ENCODE measurements at regions of chr12 and their contacts with region 1.

Region 1: GRCh38 chr12:49580572-49581535 is 12.9 kb upstream of the MCRS1 start:
- DNase-seq: peak; percentile 65
- H3K4me3 Mint-ChIP-seq: no peak overlapping the region
- H3K27ac Mint-ChIP-seq: no peak overlapping the region
- H3K4me1 Mint-ChIP-seq: peaks cover 21% of the 10 kb centered on the region
- H3K27me3 Mint-ChIP-seq: no peaks in the 10 kb centered on the region

Region 2: GRCh38 chr12:49482095-49483051 is 98.5 kb before region 1 on chr12:
- CTCF ChIA-PET with region 1: no interaction called
- POLR2A ChIA-PET with region 1: no interaction called
- DNase-seq: no peak
- H3K4me3 Mint-ChIP-seq: no peak overlapping the region
- H3K27ac Mint-ChIP-seq: no peak overlapping the region
- H3K4me1 Mint-ChIP-seq: peaks cover 8% of the 10 kb centered on the region
- H3K27me3 Mint-ChIP-seq: no peaks in the 10 kb centered on the region

Region 3: GRCh38 chr12:49515266-49515665 is 65.6 kb before region 1 on chr12:
- CTCF ChIA-PET with region 1: interaction called, 16 read pairs
- POLR2A ChIA-PET with region 1: no interaction called
- DNase-seq: no peak
- H3K4me3 Mint-ChIP-seq: no peak overlapping the region
- H3K27ac Mint-ChIP-seq: no peak overlapping the region
- H3K4me1 Mint-ChIP-seq: peaks cover 1% of the 10 kb centered on the region
- H3K27me3 Mint-ChIP-seq: no peaks in the 10 kb centered on the region

Region 4: GRCh38 chr12:49553512-49554088 is 27.3 kb before region 1 on chr12:
- CTCF ChIA-PET with region 1: interaction called, 45 read pairs
- POLR2A ChIA-PET with region 1: interaction called, 3 read pairs
- DNase-seq: no peak
- H3K4me3 Mint-ChIP-seq: no peak overlapping the region
- H3K27ac Mint-ChIP-seq: no peak overlapping the region
- H3K4me1 Mint-ChIP-seq: peaks cover 8% of the 10 kb centered on the region
- H3K27me3 Mint-ChIP-seq: peaks cover 30% of the 10 kb centered on the region

Region 5: DNA sequence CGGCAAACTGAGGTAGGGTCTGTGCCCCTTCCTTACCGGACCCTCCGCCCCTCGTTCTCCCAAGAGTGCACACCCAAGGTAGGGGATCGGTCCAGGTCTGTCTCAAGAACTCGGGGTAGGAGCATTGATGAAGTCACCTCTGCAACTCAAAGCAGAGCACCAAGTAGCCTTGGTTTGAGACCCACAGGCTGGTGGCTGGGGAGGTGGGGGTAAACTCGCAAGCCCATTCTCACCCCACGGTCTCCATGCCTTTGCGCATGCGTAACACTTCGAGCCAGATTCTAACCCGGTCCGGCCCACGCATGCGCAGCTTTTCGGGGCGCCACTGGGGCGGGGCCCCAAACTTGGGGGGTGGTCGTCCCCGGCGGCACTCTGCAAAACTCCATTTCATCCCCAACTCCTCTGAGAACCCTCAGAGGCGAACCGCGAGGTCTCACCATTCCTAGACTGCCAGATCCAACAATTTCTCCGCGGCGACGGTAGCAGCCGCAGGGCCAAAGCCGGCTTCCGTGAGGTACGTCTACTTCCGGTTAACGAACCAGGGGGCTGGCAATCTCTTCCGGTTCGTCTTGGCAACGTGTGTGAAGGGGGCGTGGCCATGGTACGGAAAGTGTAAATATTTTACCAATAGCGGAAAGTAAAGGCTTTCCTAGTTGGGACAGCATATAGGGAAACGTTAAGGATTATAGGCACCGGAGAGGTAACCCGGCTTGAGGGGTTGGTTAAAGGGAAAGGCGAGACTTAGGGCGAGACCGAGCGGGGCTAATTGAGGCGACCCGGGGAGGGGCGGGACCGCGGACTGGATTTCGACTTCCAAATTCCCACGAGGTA is 13.0 kb before region 1 on chr12 and contains the start of gene MCRS1:
- CTCF ChIA-PET with region 1: interaction called, 41 read pairs
- POLR2A ChIA-PET with region 1: interaction called, 7 read pairs
- DNase-seq: peak; percentile 90
- H3K4me3 Mint-ChIP-seq: peak within 1 kb of the TSS; percentile 97
- H3K27ac Mint-ChIP-seq: peak within 1 kb of the TSS; percentile 89
- H3K4me1 Mint-ChIP-seq: peaks cover 65% of the 10 kb centered on the region
- H3K27me3 Mint-ChIP-seq: no peaks in the 10 kb centered on the region
- total RNA-seq, gene MCRS1: 70.5 to 73.1 TPM

Region 6: DNA sequence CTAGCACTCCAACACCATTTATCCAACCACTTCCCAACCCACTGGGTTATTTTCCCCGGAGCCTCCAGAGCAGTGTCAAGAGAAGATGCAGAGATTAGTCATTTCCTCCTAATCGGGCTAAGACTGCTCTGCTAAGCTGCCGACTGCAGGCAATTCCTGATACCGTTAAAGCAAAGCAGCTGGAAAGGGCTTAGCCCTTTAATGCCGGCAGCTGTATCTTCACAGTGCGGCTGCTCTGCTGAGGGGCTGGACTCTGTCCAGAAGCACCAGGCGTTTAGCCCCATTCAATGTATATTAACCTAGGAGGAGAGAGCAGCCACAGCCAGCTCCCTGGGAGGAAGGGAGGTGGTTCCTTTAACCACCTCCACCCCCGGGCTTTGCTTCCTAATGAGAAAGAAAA is 403.0 kb after region 1 on chr12:
- CTCF ChIA-PET with region 1: no interaction called
- POLR2A ChIA-PET with region 1: no interaction called
- DNase-seq: no peak
- H3K4me3 Mint-ChIP-seq: no peak overlapping the region
- H3K27ac Mint-ChIP-seq: no peak overlapping the region
- H3K4me1 Mint-ChIP-seq: peaks cover 3% of the 10 kb centered on the region
- H3K27me3 Mint-ChIP-seq: no peaks in the 10 kb centered on the region